ENCODE measurements at regions of chr5 and their contacts with region 1.

Region 1: DNA sequence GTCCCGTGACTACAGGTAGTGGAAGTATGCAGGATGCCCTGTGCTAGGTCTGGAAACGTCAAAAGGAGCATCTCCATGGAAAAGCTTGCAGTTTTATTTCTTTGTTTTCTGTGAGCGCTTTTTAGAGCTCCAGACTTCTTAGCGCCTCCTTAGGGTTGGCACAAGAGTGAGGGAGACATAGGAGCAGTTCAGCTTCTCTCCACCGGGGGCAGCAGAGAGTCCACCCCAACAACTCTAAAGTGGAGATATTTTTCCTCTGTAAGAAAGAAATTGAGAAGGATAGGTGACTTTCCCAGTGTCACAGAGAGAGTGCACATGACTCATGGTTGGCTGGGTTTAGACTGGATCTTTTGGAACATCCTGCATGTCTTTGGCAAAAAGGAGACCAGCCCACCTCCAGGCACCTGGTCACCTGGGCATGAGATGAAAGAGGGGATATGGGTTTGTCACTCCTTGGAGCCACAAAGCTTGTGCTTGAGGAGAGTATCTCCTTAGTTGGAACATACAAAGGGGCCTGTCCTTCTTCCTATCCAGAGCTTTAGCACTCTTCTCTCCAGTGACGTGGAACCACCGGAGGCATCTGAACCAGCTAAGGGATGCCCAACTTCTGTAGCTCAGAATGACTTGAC is 637.7 kb downstream of the SEMA5A start:
- H3K4me3 ChIP-seq: no peak overlapping the region
- H3K27ac ChIP-seq: no peak overlapping the region
- H3K4me1 ChIP-seq: no peaks in the 10 kb centered on the region
- CTCF ChIP-seq: peak; percentile 31; the same call in 1 of the 2 replicates

Region 2: DNA sequence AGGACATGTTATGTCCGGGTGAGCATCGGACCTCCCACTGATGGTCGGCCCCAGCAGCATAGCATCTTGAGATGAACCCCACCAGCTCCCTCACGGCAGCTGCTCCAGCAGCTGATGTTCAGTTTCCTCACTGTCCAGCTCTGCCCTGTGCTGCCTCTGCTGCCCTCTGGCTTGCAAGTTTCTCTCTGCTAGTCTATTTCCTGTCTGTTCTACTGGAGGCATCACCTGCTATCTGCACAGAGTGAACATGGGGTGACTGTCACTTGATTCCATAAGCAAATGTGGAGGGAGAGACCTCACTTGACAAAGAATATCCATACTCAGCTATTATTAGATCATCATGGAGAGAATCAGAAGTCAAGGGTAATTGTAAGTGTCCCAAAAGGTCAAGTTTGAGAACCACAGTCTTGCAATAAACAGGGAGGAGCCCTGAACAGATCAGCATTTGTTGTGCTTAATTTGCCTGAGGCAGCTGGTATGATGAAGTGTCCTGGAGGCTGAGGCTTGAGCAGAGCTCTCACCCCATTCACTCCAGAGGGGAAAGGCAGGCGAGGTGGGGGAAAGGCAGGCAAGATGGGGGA is 65.1 kb before region 1 on chr5:
- CTCF ChIA-PET with region 1: no interaction called
- POLR2A ChIA-PET with region 1: no interaction called
- H3K4me3 ChIP-seq: no peak overlapping the region
- H3K27ac ChIP-seq: no peak overlapping the region
- H3K4me1 ChIP-seq: no peaks in the 10 kb centered on the region
- CTCF ChIP-seq: no peak

Region 3: DNA sequence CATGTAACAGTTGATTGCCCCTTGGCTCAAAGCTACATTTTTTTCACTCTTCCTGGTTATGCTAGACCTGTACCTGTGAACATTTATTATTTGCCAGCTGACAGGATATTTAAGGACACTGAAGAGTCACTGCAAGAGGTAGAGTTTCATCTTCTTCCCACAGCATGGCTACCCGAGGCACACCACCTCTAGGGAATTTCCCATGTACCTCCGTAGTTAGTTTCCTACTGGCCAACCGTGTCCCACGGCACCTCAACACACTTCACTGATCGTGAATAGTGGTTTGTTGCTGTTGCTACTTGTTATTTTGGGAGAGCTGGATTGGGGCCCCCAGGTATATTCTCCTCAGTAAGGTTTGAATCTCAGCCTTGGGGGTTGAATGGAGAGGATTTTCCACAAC is 10.9 kb before region 1 on chr5:
- CTCF ChIA-PET with region 1: interaction called, 11 read pairs
- POLR2A ChIA-PET with region 1: no interaction called
- H3K4me3 ChIP-seq: no peak overlapping the region
- H3K27ac ChIP-seq: no peak overlapping the region
- H3K4me1 ChIP-seq: no peaks in the 10 kb centered on the region
- CTCF ChIP-seq: no peak

Region 4: DNA sequence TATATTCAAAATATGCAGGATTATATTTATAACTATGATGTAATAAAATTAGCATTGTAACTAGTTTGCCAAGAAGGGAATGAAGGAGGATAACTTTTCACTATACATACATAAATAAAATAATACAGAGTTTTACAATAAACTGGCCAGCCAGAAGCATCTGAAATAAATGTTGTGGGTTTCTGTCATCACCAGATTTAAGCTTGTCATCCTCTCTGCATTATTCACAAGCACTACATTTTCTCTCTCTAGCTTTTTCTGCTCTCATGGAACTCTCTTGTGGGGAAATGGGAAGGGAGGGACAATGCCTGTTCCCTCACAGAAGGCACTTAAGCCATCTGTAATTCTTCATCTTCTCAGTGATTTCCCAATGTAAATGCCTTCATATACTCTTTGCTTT is 10.9 kb after region 1 on chr5:
- CTCF ChIA-PET with region 1: interaction called, 12 read pairs
- POLR2A ChIA-PET with region 1: no interaction called
- H3K4me3 ChIP-seq: no peak overlapping the region
- H3K27ac ChIP-seq: no peak overlapping the region
- H3K4me1 ChIP-seq: no peaks in the 10 kb centered on the region
- CTCF ChIP-seq: no peak

Measured in HEK293 (cell line).